ENCODE measurements at regions of chr2 and their contacts with region 1.

Region 1: DNA sequence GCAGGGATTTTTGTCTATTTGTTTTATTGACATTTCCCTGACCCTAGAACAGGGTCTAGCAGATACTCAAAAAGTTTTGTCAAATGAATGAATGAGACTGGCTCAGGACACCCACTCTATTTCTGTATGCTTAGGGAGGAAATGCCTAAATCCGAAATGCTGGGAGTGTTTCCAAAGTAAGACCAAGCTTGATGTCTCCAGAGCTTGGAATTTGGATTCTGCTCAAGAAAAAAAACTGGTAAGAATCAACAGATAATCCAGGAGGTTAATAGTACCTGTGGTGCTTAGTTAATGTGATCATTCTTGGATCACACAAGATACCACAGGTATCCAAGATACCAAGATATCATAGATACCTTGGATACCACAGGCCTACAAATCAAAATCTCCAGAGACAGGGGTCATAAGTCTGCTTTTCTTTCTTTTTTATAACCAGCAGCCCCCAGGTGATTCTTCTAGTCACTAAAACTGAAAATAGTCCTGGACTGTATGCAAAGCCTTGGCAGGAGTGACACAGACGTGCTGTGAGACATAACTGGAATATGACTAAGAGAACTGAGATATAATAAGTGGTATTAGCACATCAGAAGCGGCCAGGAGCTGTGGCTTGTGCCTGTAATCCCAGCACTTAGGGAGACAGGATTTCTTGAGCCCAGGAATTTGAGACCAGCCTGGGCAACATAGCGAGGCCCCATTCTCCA is 39.9 kb upstream of the SP3 start:
- DNase-seq: peak; percentile 48
- H3K4me3 Mint-ChIP-seq: no peak overlapping the region
- H3K27ac Mint-ChIP-seq: no peak overlapping the region
- H3K4me1 Mint-ChIP-seq: peaks cover 9% of the 10 kb centered on the region
- H3K27me3 Mint-ChIP-seq: peaks cover 6% of the 10 kb centered on the region

Region 2: GRCh38 chr2:173972603-173973002 is 32.5 kb before region 1 on chr2:
- CTCF ChIA-PET with region 1: no interaction called
- POLR2A ChIA-PET with region 1: no interaction called
- intact Hi-C with region 1: loop called (anchors 1 kb)
- DNase-seq: no peak
- H3K4me3 Mint-ChIP-seq: no peak overlapping the region
- H3K27ac Mint-ChIP-seq: no peak overlapping the region
- H3K4me1 Mint-ChIP-seq: peaks cover 12% of the 10 kb centered on the region
- H3K27me3 Mint-ChIP-seq: peaks cover 4% of the 10 kb centered on the region

Region 3: DNA sequence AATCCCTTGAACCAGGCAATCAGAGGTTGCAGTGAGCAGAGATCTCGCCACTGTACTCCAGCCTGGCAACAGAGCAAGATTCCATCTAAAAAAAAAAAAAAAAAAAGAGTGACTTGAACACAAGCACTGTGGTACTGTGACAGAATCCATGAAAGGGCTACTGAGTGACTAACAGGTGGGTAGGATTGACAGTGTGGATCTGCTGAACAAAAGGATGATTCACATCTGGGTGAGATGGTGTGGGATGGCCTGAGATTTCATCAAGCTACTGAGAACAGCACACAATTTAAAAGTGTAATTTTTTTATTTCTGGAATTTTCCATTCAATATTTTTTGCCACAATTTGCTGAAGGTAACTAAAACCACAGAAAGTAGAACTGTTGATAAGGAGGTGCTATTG is 26.6 kb before region 1 on chr2:
- CTCF ChIA-PET with region 1: no interaction called
- POLR2A ChIA-PET with region 1: no interaction called
- intact Hi-C with region 1: loop called (anchors 2 kb)
- DNase-seq: peak; percentile 52
- H3K4me3 Mint-ChIP-seq: no peak overlapping the region
- H3K27ac Mint-ChIP-seq: peak overlapping the region; percentile 46
- H3K4me1 Mint-ChIP-seq: peaks cover 24% of the 10 kb centered on the region
- H3K27me3 Mint-ChIP-seq: peaks cover 10% of the 10 kb centered on the region

Region 4: DNA sequence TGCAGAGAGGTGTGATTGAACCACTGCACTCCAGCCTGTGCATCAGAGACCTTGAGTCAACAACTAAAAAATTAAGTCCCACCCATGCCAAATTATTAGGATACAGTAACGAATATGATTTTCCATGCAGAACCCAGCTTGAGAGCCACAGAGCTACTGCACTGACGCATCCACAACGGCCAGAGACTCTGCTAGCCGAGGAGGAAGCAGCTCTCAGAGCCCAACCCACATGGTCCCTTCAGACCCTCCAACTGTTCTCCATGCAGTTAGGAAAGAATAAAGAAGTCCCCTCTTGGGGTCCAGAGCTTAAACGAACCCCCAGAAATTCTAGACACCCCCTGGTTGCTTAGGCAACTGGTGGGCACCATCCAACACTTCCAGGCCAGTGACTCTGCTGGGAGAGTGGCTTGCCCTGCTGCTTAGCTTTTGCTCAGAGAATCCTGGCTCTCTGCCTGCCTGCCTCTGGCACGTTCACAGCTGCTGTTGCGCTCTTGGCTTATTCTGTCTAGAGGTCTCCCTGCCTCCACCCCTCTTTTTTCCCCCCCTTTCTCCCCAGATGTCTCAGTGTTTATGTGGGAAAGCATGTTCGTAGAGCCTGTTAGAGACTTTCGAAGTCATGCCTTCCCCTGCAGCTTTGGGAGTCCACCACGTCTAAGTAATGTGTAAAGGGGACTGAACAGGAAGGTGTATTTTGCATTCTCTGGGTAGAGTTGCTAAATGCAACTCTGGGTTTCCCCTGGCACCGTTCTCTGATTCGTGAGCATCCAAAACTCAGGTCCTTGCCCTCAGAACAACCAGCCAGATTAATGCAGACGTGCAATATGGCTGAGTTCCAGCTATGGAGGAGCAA is 13.9 kb before region 1 on chr2:
- CTCF ChIA-PET with region 1: no interaction called
- POLR2A ChIA-PET with region 1: no interaction called
- intact Hi-C with region 1: no loop called
- DNase-seq: no peak
- H3K4me3 Mint-ChIP-seq: no peak overlapping the region
- H3K27ac Mint-ChIP-seq: no peak overlapping the region
- H3K4me1 Mint-ChIP-seq: peaks cover under 1% of the 10 kb centered on the region
- H3K27me3 Mint-ChIP-seq: no peaks in the 10 kb centered on the region